Transverse colon (tissue), 4 donors: ENCODE measurements at regions of chr5 and their contacts with region 1.

Region 1: DNA sequence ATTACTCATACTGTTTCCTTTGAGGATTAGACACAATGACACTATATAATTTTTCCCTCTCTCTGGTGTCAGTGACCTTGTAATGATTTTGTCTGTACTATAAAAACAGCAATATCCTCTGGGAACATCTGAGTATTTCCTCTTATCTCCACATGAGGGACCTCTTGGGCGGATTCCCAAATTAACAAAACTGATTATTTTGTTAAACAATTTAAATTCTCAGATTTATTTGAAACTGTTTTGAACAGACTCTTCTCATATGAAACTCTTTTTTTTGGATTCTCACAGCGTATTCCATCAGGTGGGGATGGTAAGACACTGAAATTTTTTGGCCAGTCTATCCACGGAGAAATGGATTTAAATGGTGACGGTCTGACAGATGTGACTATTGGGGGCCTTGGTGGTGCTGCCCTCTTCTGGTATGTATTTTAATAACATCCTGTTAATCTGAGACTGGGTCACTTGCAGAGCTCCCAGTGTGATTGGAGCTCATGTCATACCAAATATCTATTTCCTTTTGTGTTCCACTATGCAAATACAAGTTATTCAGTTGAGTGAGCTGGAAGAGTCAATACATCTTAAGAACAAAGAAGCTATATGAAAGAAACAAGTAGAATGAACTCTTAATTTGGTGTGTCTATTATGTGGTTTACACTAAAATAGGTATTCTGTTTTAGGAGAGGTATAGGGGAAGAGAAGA is 73.8 kb upstream of the ITGA2 start:
- DNase-seq: peak; percentile 37
- H3K4me3 ChIP-seq: no peak overlapping the region
- H3K27ac ChIP-seq: peak overlapping the region in 2 of 4 donors; percentile 4 to 28
- H3K4me1 ChIP-seq: peaks cover 0 to 4% (median 2%) of the 10 kb centered on the region in 4 donors
- H3K27me3 ChIP-seq: no peaks in the 10 kb centered on the region
- CTCF ChIP-seq: peak; percentile 64 to 78 (median 72)
- EP300 ChIP-seq: no peak
- POLR2A ChIP-seq: no peak

Region 2: GRCh38 chr5:52693280-52693679 is 222.0 kb before region 1 on chr5:
- in situ Hi-C with region 1: loop called (anchors 25 kb)
- intact Hi-C with region 1: no loop called
- DNase-seq: peak; percentile 15
- H3K4me3 ChIP-seq: no peak overlapping the region
- H3K27ac ChIP-seq: no peak overlapping the region
- H3K4me1 ChIP-seq: no peaks in the 10 kb centered on the region
- H3K27me3 ChIP-seq: no peaks in the 10 kb centered on the region
- CTCF ChIP-seq: peak; percentile 40 to 53 (median 49)
- EP300 ChIP-seq: no peak
- POLR2A ChIP-seq: no peak

Region 3: DNA sequence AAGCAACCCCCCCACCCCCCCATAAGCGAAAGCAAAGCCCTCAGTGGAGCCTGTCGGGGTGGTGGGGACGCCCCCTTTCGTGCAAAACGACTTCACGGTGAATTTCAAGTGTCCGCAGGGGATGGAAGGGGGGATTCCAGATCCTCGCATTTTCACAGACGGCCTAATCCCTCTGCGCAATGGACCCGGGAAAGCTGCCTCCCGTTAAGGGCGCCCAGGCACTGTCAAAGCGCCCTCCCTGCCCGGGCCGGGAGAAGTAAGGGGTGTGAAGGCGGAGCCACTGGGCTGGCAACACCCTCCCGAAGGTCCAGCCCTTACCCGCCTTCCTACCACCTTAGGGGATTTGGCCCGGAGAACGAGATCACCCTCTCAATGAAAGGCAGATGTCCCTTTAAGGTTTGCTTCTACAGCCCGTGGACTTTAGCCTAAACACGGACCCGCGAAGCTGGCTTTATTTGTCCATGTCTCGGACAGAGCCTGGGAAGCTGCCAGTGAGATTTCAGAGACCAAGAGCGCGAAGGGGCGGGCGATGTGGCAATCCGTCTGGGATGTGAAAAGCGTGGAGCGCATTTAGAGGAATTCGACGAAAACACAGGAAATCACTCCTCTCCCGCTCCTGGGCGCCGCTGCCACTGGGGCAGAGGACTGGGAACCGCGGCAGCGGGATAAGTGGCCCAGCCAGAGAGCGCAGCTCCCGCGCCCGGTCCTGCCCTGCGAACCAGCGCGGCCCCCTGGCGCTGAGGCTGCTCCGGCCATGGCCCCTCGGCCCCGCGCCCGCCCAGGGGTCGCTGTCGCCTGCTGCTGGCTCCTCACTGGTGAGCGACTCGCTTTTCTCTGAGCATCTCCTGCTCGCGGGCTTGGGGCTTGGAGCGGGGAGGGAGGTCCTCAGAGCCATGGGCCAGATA is 127.5 kb before region 1 on chr5 and contains the starts of genes ITGA1 and PELO:
- in situ Hi-C with region 1: loop called (anchors 10 to 25 kb)
- intact Hi-C with region 1: loop called (anchors 5 kb)
- DNase-seq: peak; percentile 78
- H3K4me3 ChIP-seq: peak within 1 kb of the TSS; percentile 55 to 77 (median 70)
- H3K27ac ChIP-seq: peak within 1 kb of the TSS; percentile 91 to 98 (median 95)
- H3K4me1 ChIP-seq: peaks cover 0 to 34% (median 14%) of the 10 kb centered on the region in 4 donors
- H3K27me3 ChIP-seq: no peaks in the 10 kb centered on the region
- CTCF ChIP-seq: peak; percentile 19 to 35 (median 21)
- EP300 ChIP-seq: no peak
- POLR2A ChIP-seq: peak; percentile 72
- total RNA-seq, gene ITGA1: 42.6 to 83.2 (median 48.0) TPM
- total RNA-seq, gene PELO: 10.1 to 62.3 (median 16.8) TPM

Region 4: DNA sequence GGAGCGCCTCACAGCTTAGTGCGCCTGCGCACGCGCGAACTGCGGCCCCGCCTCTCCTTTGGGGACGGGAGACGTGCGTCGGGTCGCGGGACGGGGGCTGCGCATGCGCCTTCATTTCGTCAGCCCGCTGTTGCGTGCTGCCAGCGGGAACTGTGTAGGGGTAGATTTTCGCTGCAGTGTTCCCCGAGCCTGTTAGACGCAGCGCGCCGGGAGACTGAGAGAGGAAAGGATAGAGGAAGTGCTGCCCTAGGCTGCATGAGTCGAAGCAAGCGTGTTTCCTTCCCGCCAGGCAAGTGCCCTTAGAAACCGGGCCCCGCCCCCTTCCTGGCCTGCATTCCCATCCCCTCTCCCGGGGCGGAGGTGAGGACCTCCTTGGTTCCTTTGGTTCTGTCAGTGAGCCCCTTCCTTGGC is 115.3 kb before region 1 on chr5:
- in situ Hi-C with region 1: loop called in 3 of 4 experiments (anchors 25 kb)
- intact Hi-C with region 1: no loop called
- DNase-seq: peak; percentile 96
- H3K4me3 ChIP-seq: peak overlapping the region; percentile 44 to 84 (median 55)
- H3K27ac ChIP-seq: peak overlapping the region; percentile 89 to 98 (median 93)
- H3K4me1 ChIP-seq: peaks cover 9 to 83% (median 67%) of the 10 kb centered on the region in 4 donors
- H3K27me3 ChIP-seq: no peaks in the 10 kb centered on the region
- CTCF ChIP-seq: no peak
- EP300 ChIP-seq: no peak
- POLR2A ChIP-seq: peak; percentile 73